ENCODE measurements at regions of chr15 and their contacts with region 1.

Region 1: DNA sequence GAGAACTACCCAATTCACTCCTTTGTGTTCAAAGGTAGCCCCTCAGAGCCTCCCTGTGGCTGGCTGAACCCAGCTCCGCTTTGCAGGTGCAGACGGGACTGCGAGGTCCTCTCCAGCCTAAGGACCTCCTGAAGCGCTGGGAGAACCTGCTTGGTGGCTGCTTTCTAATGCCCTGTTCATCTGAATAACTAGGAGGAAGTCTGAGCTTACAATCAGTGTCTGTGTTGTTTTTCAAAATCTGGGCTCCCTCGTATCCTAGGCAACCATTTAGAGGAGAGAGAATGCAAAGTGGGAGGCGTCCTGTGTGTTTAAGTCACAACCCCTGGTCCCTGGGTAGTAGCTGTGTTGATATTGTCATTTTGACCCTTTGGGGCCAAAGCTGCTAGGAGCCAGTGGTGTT is 99.9 kb downstream of the GABRG3 start:
- DNase-seq: peak in 1 of 2 experiments; percentile 13
- H3K4me3 ChIP-seq: 0 out of 8 replicates have a peak overlapping the region, but pooled peaks of 1 of the 4 experiments have one; percentile 2
- H3K27ac ChIP-seq: peak overlapping the region; percentile 58; the same call in 1 of the 2 replicates
- H3K4me1 ChIP-seq: peaks cover 0 to 10% (median 6%) of the 10 kb centered on the region in 4 experiments; a peak in 4 of 7 replicates
- H3K27me3 ChIP-seq: no peaks in the 10 kb centered on the region
- CTCF ChIP-seq: no peak
- EP300 ChIP-seq: no peak; a peak in 1 of 3 replicates
- POLR2A ChIP-seq: no peak
- RAD21 ChIP-seq: no peak

Region 2: GRCh38 chr15:27059610-27060202 is 11.1 kb before region 1 on chr15:
- CTCF ChIA-PET with region 1: interaction called, 17 read pairs
- POLR2A ChIA-PET with region 1: interaction called, 3 read pairs
- DNase-seq: peak; percentile 13 to 86
- H3K4me3 ChIP-seq: no peak overlapping the region
- H3K27ac ChIP-seq: no peak overlapping the region
- H3K4me1 ChIP-seq: no peaks in the 10 kb centered on the region
- H3K27me3 ChIP-seq: no peaks in the 10 kb centered on the region
- CTCF ChIP-seq: peak; percentile 29 to 83 (median 56)
- EP300 ChIP-seq: no peak
- POLR2A ChIP-seq: no peak
- RAD21 ChIP-seq: peak; percentile 57 to 70

Region 3: GRCh38 chr15:27081676-27082418 is 11.0 kb after region 1 on chr15:
- CTCF ChIA-PET with region 1: interaction called, 11 read pairs
- POLR2A ChIA-PET with region 1: no interaction called
- DNase-seq: no peak
- H3K4me3 ChIP-seq: no peak overlapping the region
- H3K27ac ChIP-seq: no peak overlapping the region
- H3K4me1 ChIP-seq: peaks cover 0 to 8% (median 0%) of the 10 kb centered on the region in 4 experiments; a peak in 4 of 7 replicates
- H3K27me3 ChIP-seq: no peaks in the 10 kb centered on the region; a peak in 1 of 7 replicates
- CTCF ChIP-seq: no peak
- EP300 ChIP-seq: no peak
- POLR2A ChIP-seq: no peak
- RAD21 ChIP-seq: no peak